ENCODE measurements at regions of chr3 and their contacts with region 1.

Region 1: GRCh38 chr3:197599089-197599765 is 43.5 kb upstream of the BDH1 start:
- DNase-seq: peak; percentile 86
- ATAC-seq: peak; percentile 99
- H3K4me3 Mint-ChIP-seq: no peak overlapping the region
- H3K27ac Mint-ChIP-seq: no peak overlapping the region
- H3K4me1 Mint-ChIP-seq: no peaks in the 10 kb centered on the region
- H3K27me3 Mint-ChIP-seq: no peaks in the 10 kb centered on the region

Region 2: DNA sequence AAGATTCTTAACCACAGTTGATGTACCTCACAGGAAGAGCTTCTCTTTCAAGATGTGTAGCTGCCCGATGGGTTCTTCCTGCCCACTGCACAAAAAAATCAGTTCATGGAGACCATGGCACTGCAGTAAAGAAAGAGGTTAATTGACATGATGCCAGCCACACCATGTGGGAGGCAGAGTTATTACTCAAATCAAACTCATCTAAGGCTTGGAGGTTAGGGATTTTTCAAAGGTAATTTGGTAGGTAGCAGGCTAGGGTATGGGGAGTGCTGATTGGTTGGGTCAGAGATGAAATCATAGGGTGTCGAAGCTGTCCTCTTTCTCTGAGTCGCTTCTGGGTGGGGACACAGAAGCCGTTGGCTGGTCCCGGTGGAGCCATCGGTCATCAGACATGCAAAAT is 14.0 kb after region 1 on chr3:
- CTCF ChIA-PET with region 1: interaction called, 73 read pairs
- POLR2A ChIA-PET with region 1: no interaction called
- intact Hi-C with region 1: loop called (anchors 1 to 2 kb)
- DNase-seq: peak; percentile 61
- ATAC-seq: peak; percentile 93
- H3K4me3 Mint-ChIP-seq: no peak overlapping the region
- H3K27ac Mint-ChIP-seq: peak overlapping the region; percentile 74
- H3K4me1 Mint-ChIP-seq: peaks cover 17% of the 10 kb centered on the region
- H3K27me3 Mint-ChIP-seq: no peaks in the 10 kb centered on the region

Region 3: DNA sequence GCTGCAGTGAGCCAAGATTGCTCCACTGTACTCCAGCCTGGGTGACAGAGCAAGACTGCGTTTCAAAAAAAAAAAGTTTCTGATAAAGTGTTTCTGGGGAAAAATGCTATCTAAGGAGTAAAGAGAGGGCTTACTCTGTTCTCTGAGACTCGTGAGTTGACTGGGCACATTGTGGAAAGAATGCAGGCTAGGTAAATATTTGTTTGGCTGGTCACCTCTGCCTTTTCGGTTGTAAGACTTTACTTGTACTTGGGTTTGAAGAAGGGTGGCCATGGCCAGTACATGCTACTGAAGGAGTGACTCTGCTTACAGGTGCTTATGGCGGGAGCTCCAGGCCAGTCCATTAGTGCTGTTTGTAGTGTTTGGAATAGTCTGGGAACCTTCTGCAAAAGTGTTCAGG is 68.8 kb after region 1 on chr3:
- CTCF ChIA-PET with region 1: interaction called, 19 read pairs
- POLR2A ChIA-PET with region 1: no interaction called
- intact Hi-C with region 1: loop called (anchors 5 kb)
- DNase-seq: no peak
- ATAC-seq: no peak
- H3K4me3 Mint-ChIP-seq: no peak overlapping the region
- H3K27ac Mint-ChIP-seq: no peak overlapping the region
- H3K4me1 Mint-ChIP-seq: no peaks in the 10 kb centered on the region
- H3K27me3 Mint-ChIP-seq: no peaks in the 10 kb centered on the region

Region 4: DNA sequence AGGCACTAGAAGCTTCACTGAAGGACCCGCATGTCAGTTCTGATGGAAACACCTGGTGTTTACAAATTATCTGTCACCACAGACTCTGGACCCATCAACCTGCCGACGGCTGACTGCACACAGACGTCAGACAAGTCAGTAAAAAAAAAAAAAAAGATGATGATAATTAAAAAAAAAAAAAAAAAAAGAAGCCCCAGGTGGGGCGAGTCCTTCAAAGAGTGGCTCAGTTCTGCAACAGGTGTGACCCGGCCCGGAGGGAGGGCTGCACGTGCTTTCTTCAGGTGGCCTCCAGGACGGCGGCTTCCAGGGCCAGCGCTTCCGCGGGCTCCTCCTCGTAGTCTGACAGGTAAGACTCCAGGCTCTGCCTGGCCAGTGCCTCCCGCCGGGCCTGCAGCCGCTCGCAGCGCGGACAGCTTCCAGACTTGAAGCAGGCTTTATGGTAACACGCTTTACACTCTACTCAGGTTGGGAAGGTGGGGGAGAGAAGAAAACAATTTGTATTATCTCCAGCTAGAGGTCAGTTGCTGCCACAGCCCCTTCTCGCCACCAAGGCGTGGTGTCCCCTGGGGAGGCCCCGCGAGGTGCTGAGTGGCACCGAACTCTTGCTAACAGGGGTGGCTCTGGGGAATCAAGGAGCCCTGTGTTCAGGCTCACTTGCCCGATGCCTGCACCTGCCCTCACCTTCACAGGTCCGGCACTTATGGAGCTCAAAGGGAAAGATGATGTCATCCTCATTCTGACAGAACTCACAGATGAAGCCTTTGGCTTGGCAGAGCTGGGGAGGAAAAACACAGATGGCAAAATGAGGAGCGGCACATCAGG is 75.7 kb after region 1 on chr3:
- CTCF ChIA-PET with region 1: interaction called, 19 read pairs
- POLR2A ChIA-PET with region 1: no interaction called
- intact Hi-C with region 1: loop called in 1 of 2 experiments (anchors 5 kb)
- DNase-seq: no peak
- ATAC-seq: no peak
- H3K4me3 Mint-ChIP-seq: no peak overlapping the region
- H3K27ac Mint-ChIP-seq: no peak overlapping the region
- H3K4me1 Mint-ChIP-seq: no peaks in the 10 kb centered on the region
- H3K27me3 Mint-ChIP-seq: no peaks in the 10 kb centered on the region

Region 5: GRCh38 chr3:197801891-197802778 is 202.9 kb after region 1 on chr3:
- CTCF ChIA-PET with region 1: interaction called, 5 read pairs
- POLR2A ChIA-PET with region 1: no interaction called
- intact Hi-C with region 1: loop called in 1 of 2 experiments (anchors 1 kb)
- DNase-seq: peak; percentile 48
- ATAC-seq: peak; percentile 65
- H3K4me3 Mint-ChIP-seq: no peak overlapping the region
- H3K27ac Mint-ChIP-seq: peak overlapping the region; percentile 9
- H3K4me1 Mint-ChIP-seq: peaks cover 52% of the 10 kb centered on the region
- H3K27me3 Mint-ChIP-seq: no peaks in the 10 kb centered on the region